Spleen (tissue), 13 donors: ENCODE measurements at regions of chr12 and their contacts with region 1.

Region 1: GRCh38 chr12:51531978-51532497 is 59.0 kb upstream of the SCN8A start:
- DNase-seq: peak; percentile 87
- H3K4me3 ChIP-seq: no peak overlapping the region
- H3K27ac ChIP-seq: no peak overlapping the region
- H3K4me1 ChIP-seq: peaks cover 0 to 9% (median 4%) of the 10 kb centered on the region in 6 donors
- H3K27me3 ChIP-seq: peaks cover 0 to 30% (median 4%) of the 10 kb centered on the region in 7 donors
- CTCF ChIP-seq: peak; percentile 65 to 93 (median 84)
- POLR2A ChIP-seq: no peak

Region 2: DNA sequence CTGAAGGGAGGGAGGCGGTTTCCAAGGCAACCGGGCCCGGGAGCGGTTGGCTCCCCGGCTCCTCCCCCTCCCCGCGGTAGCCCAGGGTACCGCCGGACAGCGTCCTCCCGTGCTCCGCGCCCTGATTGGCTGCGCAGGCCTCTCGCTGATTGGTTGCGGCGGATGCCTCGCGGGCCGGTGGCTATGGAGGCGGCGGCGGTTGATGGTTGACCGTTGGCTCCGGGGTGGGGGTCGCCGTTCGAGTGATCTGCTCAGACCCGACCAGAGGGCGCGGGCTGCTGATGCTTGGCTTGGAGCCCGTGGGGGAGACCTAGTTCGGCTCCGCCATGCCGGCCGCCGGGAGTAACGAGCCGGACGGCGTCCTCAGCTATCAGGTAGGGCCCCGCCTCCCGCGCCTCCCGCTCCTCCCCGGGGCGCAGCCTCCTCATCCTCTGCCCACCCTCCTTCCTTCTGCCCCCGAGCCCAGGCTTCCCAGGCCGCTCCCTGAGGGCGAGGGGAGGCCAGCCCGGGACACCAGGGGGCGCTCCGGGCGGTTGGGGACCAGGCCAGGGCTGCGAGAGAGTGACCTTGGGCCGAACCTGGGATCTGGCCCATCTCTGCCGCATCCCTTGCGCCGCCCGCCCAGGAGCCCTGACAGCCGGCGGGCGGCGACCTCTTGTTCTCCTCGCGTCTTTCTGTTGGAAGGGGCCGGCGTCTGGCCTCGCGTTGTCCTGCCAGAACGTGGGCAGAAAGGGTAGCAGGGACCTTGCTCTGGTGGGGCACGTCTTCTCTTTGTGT is 107.2 kb before region 1 on chr12 and contains the start of gene SLC4A8:
- intact Hi-C with region 1: loop called (anchors 5 kb)
- DNase-seq: peak; percentile 95
- H3K4me3 ChIP-seq: peak within 1 kb of the TSS; percentile 60 to 83 (median 74)
- H3K27ac ChIP-seq: peak within 1 kb of the TSS in 2 of 8 donors; percentile 8 to 25
- H3K4me1 ChIP-seq: peaks cover 4 to 19% (median 14%) of the 10 kb centered on the region in 6 donors
- H3K27me3 ChIP-seq: peaks cover 0 to 31% (median 15%) of the 10 kb centered on the region in 7 donors
- CTCF ChIP-seq: peak in 10 of 11 experiments; percentile 49 to 83 (median 71)
- POLR2A ChIP-seq: no peak
- total RNA-seq, gene SLC4A8: 4.3 to 9.7 (median 5.7) TPM

Region 3: DNA sequence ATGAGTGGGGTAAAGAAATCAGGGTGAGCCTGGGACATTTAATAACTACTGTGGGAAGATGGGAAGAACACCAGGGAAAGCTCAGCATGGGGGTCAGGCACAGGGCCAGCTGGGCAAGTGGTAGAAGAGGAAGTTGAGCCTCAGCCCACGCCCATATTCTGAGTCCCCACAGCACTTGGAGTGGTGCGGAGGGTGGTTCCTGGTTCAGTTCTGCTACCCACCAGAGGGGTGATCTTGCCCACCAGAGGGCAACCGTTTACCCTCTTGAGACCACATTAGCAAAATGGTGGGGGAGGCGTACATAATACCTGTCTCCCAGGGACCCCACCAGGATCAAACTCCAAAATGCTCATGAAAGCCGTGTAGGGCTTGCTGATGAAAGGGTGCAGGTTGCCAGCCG is 339.1 kb after region 1 on chr12:
- intact Hi-C with region 1: loop called (anchors 10 kb)
- DNase-seq: no peak
- H3K4me3 ChIP-seq: no peak overlapping the region
- H3K27ac ChIP-seq: no peak overlapping the region
- H3K4me1 ChIP-seq: peaks cover 25 to 43% (median 30%) of the 10 kb centered on the region in 6 donors
- H3K27me3 ChIP-seq: peaks cover 0 to 40% (median 14%) of the 10 kb centered on the region in 7 donors
- CTCF ChIP-seq: peak in 1 of 11 experiments; percentile 6
- POLR2A ChIP-seq: no peak